Caco-2 (cell line): ENCODE measurements at regions of chr2 and their contacts with region 1.

Region 1: DNA sequence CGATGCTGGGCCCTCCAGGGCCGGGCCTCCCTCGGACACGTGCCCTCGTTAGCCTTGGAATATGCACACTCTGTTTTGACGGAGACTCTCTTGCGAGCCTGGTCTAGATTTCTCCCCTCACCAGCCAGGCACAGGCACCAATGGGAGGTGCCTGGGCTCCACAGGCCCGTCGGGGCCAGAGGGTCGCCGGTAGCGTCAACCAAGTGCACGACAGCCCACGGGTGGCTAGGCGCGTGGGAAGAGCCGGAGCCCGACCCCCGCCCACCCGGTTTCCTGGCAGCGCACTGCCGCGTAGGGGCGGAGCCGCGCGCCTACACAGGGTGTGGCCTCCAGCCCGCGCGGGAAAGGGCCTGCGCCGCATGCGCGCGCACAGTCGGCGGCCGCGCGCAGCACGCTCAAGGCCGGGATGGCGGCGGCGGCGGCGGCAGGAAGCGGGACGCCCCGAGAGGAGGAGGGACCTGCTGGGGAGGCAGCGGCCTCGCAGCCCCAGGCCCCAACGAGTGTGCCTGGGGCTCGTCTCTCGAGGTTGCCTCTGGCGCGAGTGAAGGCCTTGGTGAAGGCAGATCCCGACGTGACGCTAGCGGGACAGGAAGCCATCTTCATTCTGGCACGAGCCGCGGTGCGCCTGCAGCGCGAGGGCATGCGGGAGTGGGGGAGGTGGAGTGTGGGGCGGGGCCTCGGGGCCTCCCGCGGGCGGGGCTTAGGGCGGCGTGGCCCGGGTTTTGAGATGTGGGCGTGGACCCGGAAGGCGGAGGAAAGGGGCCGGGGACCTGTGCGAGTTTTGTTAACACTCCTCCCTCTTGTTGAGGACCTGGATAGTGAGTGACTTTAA is at the start of gene POLE4:
- DNase-seq: peak; percentile 95 to 96
- H3K4me3 ChIP-seq: peak within 1 kb of the TSS; percentile 90
- H3K4me3 Mint-ChIP-seq: peak within 1 kb of the TSS; percentile 92
- H3K27ac Mint-ChIP-seq: peak within 1 kb of the TSS; percentile 98
- H3K4me1 ChIP-seq: peaks cover 14% of the 10 kb centered on the region
- H3K4me1 Mint-ChIP-seq: peaks cover 22% of the 10 kb centered on the region
- H3K27me3 ChIP-seq: no peaks in the 10 kb centered on the region
- H3K27me3 Mint-ChIP-seq: no peaks in the 10 kb centered on the region
- CTCF ChIP-seq: peak in 1 of 2 experiments; percentile 2
- total RNA-seq, gene POLE4: 101 and 117 TPM in 2 replicates

Region 2: DNA sequence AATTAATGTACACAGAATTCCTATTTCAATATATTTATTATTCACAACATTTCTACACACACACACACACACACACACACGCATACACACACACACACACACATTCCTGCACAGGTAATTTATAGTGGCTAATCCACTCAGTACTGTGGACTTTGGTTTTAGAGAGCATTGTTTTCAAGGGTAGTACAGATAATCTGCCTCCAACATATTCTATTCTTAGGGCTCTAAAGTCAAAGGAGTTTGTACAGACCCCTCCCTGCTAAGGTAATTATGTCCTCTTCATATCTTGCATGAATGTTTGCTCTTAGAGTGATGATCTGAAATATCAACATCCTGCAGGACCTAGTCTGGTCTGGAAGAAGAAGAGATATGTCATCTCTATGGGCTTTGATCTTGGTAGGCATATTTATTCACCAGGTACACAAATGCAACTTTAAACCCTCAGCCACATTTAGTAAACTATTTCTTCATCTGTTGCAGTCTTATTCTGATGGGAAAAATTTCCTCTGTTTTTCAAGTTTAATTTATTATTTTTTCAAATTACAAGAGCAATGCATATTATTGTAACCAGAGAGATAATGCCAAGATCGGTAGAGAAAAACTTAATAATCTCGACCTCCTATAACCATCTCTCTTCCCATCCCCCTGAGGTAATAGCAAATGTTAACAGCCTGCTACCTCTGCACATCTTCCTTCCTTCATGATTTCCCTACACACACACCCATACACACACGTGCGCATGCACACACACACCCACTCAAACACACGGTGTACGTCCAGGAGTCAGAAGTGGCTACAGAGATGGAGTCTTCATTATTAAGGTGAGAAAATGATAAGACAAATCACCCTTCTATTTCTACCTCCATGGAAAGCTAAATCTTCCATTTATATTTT is 18.3 kb before region 1 on chr2:
- CTCF ChIA-PET with region 1: no interaction called
- POLR2A ChIA-PET with region 1: no interaction called
- intact Hi-C with region 1: loop called (anchors 1 kb)
- DNase-seq: peak; percentile 67 to 68
- H3K4me3 ChIP-seq: no peak overlapping the region
- H3K4me3 Mint-ChIP-seq: peak overlapping the region; percentile 20
- H3K27ac Mint-ChIP-seq: peak overlapping the region; percentile 3
- H3K4me1 ChIP-seq: peaks cover 40% of the 10 kb centered on the region
- H3K4me1 Mint-ChIP-seq: peaks cover 30% of the 10 kb centered on the region
- H3K27me3 ChIP-seq: no peaks in the 10 kb centered on the region
- H3K27me3 Mint-ChIP-seq: no peaks in the 10 kb centered on the region
- CTCF ChIP-seq: no peak

Region 3: GRCh38 chr2:74944987-74945787 is 13.3 kb before region 1 on chr2:
- CTCF ChIA-PET with region 1: no interaction called
- POLR2A ChIA-PET with region 1: no interaction called
- intact Hi-C with region 1: loop called (anchors 1 kb)
- DNase-seq: no peak
- H3K4me3 ChIP-seq: no peak overlapping the region
- H3K4me3 Mint-ChIP-seq: no peak overlapping the region
- H3K27ac Mint-ChIP-seq: no peak overlapping the region
- H3K4me1 ChIP-seq: peaks cover 52% of the 10 kb centered on the region
- H3K4me1 Mint-ChIP-seq: peaks cover 18% of the 10 kb centered on the region
- H3K27me3 ChIP-seq: no peaks in the 10 kb centered on the region
- H3K27me3 Mint-ChIP-seq: no peaks in the 10 kb centered on the region
- CTCF ChIP-seq: no peak